RWPE1 (cell line): ENCODE measurements at regions of chr15 and their contacts with region 1.

Region 1: DNA sequence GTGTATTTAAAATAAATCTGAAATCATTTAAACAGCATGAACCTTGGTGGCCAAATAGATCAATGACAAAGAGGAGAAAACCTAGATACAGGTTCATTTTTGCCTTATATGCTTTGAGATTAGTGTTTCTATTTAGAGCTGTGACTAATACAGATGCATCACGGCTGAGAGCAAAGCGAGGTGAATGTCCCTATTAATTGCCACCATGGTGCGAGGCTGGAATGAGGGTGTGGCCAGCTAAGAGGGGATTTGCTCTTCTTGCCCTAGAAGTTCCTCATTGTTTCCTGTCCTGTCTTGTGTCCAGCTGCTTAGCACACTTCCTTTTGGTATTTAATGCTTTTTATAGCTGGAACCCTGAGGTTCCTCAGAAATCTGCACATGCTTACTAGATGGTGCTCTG is 339.1 kb upstream of the RGMA start:
- DNase-seq: peak; percentile 55
- H3K27ac ChIP-seq: no peak overlapping the region; the same call in 1 of the 2 replicates
- CTCF ChIP-seq: no peak

Region 2: DNA sequence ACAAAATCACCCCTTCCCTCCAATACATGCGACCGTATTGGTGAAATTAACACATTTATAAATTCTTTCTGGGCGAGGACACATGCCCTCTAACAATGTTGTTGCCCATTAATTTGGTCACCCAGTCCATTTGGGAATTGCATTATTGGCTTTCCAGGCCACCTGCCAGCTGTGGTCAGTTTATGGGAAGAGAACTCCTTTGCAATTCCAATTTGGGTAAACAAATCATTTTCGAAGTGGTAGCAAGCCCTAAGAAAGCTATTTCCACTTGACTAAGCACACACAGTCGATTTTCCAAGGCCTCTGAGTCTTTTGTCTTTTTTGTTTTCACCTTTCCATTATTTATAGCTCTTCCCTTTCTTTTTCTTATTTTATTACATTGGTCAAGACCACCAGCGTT is 23.1 kb after region 1 on chr15:
- CTCF ChIA-PET with region 1: no interaction called
- POLR2A ChIA-PET with region 1: no interaction called
- DNase-seq: no peak
- H3K27ac ChIP-seq: no peak overlapping the region
- CTCF ChIP-seq: no peak

Region 3: DNA sequence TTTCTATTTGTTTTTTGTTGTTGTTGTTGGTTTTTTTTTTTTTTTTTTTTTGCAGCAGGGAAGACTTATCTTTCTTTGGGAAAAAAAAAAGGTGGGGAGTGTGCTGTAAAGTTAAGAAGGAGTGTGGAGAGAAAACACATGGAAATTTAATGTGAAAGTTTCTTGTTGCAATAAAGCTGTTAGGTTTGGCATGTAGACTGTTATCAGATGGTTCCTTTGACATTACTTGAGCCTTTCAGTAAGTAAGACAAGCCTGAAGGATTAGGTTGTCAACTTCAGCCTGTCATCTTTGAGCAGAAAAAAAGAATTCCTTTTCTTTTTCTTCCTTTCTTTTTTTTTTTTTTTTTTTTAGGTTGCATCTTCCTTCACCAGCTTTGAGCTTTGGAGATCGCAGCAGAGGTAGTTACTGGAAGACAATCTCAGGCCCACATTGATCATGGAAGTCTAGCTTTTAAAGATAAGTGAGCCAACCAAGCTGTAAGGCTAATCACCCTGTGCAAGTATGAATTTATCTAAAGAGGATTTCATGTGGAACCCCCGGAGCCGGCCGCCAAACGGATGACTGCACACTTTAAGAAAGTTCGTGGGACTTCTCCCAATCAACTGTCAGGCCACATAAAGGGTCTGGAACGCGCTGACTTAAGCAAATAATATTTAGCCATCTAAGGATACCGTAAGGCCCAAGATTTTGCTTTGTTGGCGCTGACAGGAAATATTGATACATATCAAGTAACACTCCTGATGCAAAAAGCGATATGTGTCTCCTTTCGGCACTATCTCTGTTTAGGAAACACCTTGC is 1862.2 kb after region 1 on chr15:
- CTCF ChIA-PET with region 1: no interaction called
- POLR2A ChIA-PET with region 1: interaction called, 14 read pairs
- DNase-seq: no peak
- H3K27ac ChIP-seq: no peak overlapping the region
- CTCF ChIP-seq: no peak